ENCODE measurements at regions of chr2 and their contacts with region 1.

Region 1: GRCh38 chr2:70029814-70030409 is 57.4 kb upstream of the PCBP1 start:
- DNase-seq: peak; percentile 35 to 87
- ATAC-seq: peak; percentile 88 to 97 (median 94)
- H3K4me3 ChIP-seq: peak overlapping the region in 1 of 10 donors; percentile 0
- H3K27ac ChIP-seq: peak overlapping the region; percentile 26 to 89 (median 82)
- H3K4me1 ChIP-seq: peaks cover 3 to 33% (median 27%) of the 10 kb centered on the region in 9 donors
- H3K27me3 ChIP-seq: no peaks in the 10 kb centered on the region
- CTCF ChIP-seq: no peak

Region 2: GRCh38 chr2:69734035-69734631 is 295.8 kb before region 1 on chr2:
- intact Hi-C with region 1: no loop called
- DNase-seq: no peak
- ATAC-seq: peak in 2 of 8 donors; percentile 20 to 24
- H3K4me3 ChIP-seq: no peak overlapping the region
- H3K27ac ChIP-seq: no peak overlapping the region
- H3K4me1 ChIP-seq: peaks cover 0 to 9% (median 0%) of the 10 kb centered on the region in 9 donors
- H3K27me3 ChIP-seq: no peaks in the 10 kb centered on the region
- CTCF ChIP-seq: no peak

Region 3: DNA sequence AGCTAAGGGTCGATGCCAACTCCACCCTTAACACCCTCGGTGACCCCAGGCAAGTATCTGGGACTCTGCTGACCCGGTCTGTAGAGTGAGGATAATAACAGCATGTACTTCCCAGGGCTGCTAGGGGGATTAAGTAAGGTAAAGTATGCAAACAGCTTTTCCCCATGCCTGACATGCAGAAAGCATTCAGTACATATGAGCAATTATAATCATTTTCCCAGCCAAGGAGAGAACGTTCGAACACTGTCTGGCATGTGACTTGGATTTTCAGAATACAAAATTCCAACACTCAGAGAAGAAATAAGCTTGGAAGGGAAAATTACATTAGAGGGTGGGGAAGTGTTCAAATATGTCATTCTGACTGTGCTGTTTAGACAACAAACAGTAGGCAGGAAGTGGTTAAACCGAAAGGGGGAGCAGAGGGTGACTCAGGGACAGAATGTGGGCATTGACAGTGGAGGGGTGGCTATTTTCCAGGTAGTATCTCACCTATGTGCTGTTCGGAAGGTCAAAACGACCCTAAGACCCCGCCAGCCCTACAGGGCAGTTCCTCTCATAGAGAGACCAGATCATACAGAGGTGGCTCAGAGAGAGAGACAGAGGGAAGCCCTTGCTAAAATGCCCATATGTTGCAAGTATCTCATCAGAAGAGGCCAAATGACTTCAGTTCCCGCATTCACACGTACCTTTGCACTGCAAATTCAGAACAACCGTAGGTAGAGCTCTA is 83.4 kb before region 1 on chr2:
- intact Hi-C with region 1: loop called in 1 of 10 experiments (anchors 10 kb)
- DNase-seq: no peak
- ATAC-seq: peak in 3 of 8 donors; percentile 35 to 51 (median 43)
- H3K4me3 ChIP-seq: no peak overlapping the region
- H3K27ac ChIP-seq: peak overlapping the region in 2 of 10 donors; percentile 49 to 86
- H3K4me1 ChIP-seq: peaks cover 0 to 62% (median 0%) of the 10 kb centered on the region in 9 donors
- H3K27me3 ChIP-seq: peaks cover 0 to 12% (median 0%) of the 10 kb centered on the region in 7 donors
- CTCF ChIP-seq: no peak

Measured in heart right ventricle (tissue), 16 donors.